Naive thymus-derived CD4-positive, alpha-beta T cell (primary cell): ENCODE measurements at regions of chr9 and their contacts with region 1.

Region 1: DNA sequence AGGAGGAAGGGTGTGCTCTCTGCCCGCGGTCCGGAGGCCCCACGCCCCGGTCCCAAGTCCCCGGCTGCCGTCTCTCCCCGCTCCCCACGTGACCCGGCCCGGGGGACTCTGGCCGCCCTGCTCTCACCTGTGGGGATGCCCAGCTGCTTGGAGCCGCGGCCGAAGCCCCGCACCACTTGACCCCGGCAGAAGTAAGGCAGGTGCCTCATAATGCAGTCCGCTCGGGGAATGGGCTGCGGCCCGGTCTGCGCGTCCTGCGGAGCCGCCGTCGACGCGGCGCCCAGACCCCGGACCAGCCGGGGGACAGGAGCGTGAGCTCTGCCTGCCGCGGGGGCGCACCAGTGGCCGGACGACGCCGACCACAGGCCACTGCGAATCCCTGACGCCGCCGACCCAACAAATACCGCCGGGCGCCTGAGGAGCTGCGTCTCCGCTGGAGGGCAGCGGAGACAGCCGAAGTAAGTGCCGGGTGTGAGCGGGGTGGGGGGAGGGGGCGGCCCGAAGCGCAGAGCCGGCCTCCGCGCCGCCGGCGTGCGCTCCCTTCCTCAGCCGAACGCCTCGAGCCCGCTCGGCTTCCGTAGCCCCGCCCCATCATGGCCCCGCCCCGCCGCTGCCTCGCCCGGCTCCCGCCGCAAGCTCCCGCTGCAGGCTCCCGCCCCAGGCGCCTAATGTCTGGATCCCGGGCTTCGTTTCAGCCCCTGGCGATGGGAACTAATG is at the start of gene RFK:
- DNase-seq: peak; percentile 89 to 99 (median 95)
- ATAC-seq: peak; percentile 97
- H3K4me3 ChIP-seq: peak within 1 kb of the TSS; percentile 92
- H3K4me3 Mint-ChIP-seq: peak within 1 kb of the TSS; percentile 94 to 100 (median 97)
- H3K27ac ChIP-seq: peak within 1 kb of the TSS; percentile 93
- H3K27ac Mint-ChIP-seq: peak within 1 kb of the TSS; percentile 95 to 99 (median 98)
- H3K4me1 ChIP-seq: peaks cover 10 to 13% of the 10 kb centered on the region in 2 donors
- H3K4me1 Mint-ChIP-seq: peaks cover 16 to 37% (median 33%) of the 10 kb centered on the region in 7 donors
- H3K27me3 ChIP-seq: no peaks in the 10 kb centered on the region
- H3K27me3 Mint-ChIP-seq: no peaks in the 10 kb centered on the region
- total RNA-seq, gene RFK: 6.8 to 18.6 (median 11.3) TPM

Region 2: DNA sequence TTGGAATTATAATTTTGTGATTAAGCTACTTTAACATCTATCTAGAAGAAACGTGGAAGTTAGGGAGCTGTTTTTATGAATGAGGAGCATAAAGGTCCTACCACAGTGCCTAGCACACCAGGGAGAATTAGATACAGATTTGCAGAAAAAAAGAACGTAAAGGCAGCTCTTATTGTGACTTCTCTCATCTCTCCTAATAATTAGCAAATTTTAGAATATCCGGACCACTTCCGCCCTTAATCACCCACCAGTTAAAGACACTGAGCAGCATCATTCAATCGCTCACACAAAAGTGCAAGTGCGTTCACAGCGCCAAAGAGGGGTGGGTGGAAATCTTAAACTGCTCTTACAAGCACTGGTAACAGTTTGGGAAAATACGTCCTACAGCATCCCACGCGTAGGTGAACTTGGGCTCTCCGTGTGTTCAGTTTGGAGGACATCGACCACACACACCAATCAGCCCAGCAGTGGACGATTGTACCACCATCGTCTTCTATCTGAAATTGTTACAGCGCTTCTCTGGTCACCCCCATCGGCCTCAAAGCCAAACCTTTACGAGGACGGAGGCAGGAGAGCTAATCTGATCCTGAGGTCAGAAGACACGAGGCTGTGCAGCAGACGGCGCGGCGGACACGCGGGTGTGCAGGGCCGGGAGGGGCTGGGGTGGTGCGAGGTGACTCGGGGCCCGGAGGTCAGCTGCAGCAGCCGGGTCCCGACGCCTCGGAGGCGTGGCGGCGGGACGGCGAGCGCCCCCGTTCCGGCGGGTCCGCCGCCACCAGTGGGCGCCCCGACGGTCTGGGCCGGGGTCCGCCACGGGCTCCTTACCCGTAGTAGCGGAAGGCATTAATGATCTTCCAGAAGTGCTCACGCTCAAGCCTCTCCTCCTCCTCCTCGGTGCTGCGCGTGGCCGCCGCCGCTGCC is 1366.7 kb before region 1 on chr9:
- CTCF ChIA-PET with region 1: no interaction called
- POLR2A ChIA-PET with region 1: interaction called, 4 read pairs
- intact Hi-C with region 1: loop called (anchors 1 kb)
- DNase-seq: peak in 8 of 9 donors; percentile 27 to 66 (median 35)
- ATAC-seq: peak; percentile 18
- H3K4me3 ChIP-seq: peak overlapping the region; percentile 69
- H3K4me3 Mint-ChIP-seq: peak overlapping the region; percentile 80 to 98 (median 96)
- H3K27ac ChIP-seq: peak overlapping the region; percentile 90
- H3K27ac Mint-ChIP-seq: peak overlapping the region; percentile 84 to 98 (median 95)
- H3K4me1 ChIP-seq: peaks cover 34 to 42% of the 10 kb centered on the region in 2 donors
- H3K4me1 Mint-ChIP-seq: peaks cover 30 to 54% (median 48%) of the 10 kb centered on the region in 7 donors
- H3K27me3 ChIP-seq: no peaks in the 10 kb centered on the region
- H3K27me3 Mint-ChIP-seq: peaks cover 0 to 3% (median 0%) of the 10 kb centered on the region in 5 donors

Region 3: DNA sequence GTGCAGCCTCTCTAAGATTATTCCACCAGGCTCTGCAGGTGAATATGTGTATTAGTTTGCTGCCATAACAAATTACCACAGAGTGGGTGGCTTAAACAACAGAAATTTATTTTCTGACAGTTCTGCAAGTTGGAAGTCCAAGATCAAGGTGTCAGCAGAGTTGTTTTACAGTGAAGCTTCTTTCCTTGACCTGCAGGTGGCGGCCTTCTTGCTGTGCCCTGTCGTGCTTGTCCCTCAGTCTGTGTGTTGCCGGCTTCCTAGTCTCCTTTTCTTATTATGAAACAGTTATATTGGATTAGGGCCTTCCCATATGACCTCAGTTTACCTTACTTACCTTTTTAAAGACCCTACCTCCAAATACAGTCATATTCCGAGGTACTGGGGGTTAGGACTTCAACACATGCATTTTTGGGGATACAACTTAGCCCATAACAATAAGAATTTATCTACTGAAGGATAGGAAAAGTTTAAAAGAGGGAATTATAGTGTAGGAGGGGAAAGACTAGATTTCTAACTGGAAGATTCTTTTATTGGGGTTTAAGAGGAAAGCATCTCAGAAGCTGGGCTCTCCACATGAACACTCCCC is 1208.4 kb before region 1 on chr9:
- CTCF ChIA-PET with region 1: no interaction called
- POLR2A ChIA-PET with region 1: no interaction called
- intact Hi-C with region 1: loop called in 1 of 2 experiments (anchors 5 kb)
- DNase-seq: peak in 7 of 9 donors; percentile 10 to 38 (median 25)
- ATAC-seq: peak; percentile 74
- H3K4me3 ChIP-seq: no peak overlapping the region
- H3K4me3 Mint-ChIP-seq: peak overlapping the region in 3 of 10 donors; percentile 20 to 36 (median 25)
- H3K27ac ChIP-seq: no peak overlapping the region
- H3K27ac Mint-ChIP-seq: peak overlapping the region in 2 of 9 donors; percentile 30 to 81
- H3K4me1 ChIP-seq: peaks cover 12 to 13% of the 10 kb centered on the region in 2 donors
- H3K4me1 Mint-ChIP-seq: peaks cover 8 to 32% (median 28%) of the 10 kb centered on the region in 7 donors
- H3K27me3 ChIP-seq: no peaks in the 10 kb centered on the region
- H3K27me3 Mint-ChIP-seq: no peaks in the 10 kb centered on the region

Region 4: DNA sequence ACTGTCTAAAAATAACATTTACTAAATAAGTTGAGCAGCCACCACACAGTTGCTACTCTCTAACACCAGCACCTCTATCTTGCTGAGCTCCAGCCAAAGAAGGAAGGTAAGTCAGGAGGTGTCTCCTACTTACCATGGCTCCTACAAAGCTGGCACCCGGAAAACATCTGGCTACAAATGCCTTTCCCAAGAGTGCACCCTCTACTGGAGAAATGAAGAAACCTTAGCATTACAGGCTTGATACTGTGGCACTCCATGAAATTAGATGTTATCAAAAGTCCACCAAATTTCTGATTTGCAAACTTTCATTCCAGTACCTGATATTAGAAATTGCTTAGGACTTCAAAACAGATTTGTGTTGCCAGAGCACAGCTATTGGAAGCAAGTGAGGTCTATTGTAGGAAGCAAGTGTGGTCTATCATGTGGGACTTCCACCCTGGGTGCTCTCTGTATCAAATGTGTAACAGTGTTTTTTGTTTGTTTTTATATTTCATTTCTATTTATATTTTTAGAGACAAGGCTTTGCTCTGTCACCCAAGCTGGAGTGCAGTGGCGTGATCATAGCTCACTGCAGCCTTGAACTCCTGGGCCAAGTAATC is 25.8 kb after region 1 on chr9:
- CTCF ChIA-PET with region 1: no interaction called
- POLR2A ChIA-PET with region 1: no interaction called
- intact Hi-C with region 1: loop called in 1 of 2 experiments (anchors 1 kb)
- DNase-seq: peak in 1 of 9 donors; percentile 5
- ATAC-seq: no peak
- H3K4me3 ChIP-seq: no peak overlapping the region
- H3K4me3 Mint-ChIP-seq: no peak overlapping the region
- H3K27ac ChIP-seq: no peak overlapping the region
- H3K27ac Mint-ChIP-seq: no peak overlapping the region
- H3K4me1 ChIP-seq: no peaks in the 10 kb centered on the region
- H3K4me1 Mint-ChIP-seq: peaks cover 3 to 40% (median 4%) of the 10 kb centered on the region in 7 donors
- H3K27me3 ChIP-seq: no peaks in the 10 kb centered on the region
- H3K27me3 Mint-ChIP-seq: no peaks in the 10 kb centered on the region

Region 5: GRCh38 chr9:76576344-76576743 is 182.2 kb after region 1 on chr9:
- CTCF ChIA-PET with region 1: no interaction called
- POLR2A ChIA-PET with region 1: no interaction called
- intact Hi-C with region 1: loop called in 1 of 2 experiments (anchors 2 kb)
- DNase-seq: peak in 1 of 9 donors; percentile 59
- ATAC-seq: peak; percentile 87
- H3K4me3 ChIP-seq: no peak overlapping the region
- H3K4me3 Mint-ChIP-seq: peak overlapping the region in 1 of 10 donors; percentile 36
- H3K27ac ChIP-seq: no peak overlapping the region
- H3K27ac Mint-ChIP-seq: peak overlapping the region in 1 of 9 donors; percentile 73
- H3K4me1 ChIP-seq: no peaks in the 10 kb centered on the region
- H3K4me1 Mint-ChIP-seq: peaks cover 6 to 36% (median 12%) of the 10 kb centered on the region in 7 donors
- H3K27me3 ChIP-seq: peaks cover 0 to 11% of the 10 kb centered on the region in 2 donors
- H3K27me3 Mint-ChIP-seq: peaks cover 10 to 45% (median 32%) of the 10 kb centered on the region in 5 donors

Region 6: DNA sequence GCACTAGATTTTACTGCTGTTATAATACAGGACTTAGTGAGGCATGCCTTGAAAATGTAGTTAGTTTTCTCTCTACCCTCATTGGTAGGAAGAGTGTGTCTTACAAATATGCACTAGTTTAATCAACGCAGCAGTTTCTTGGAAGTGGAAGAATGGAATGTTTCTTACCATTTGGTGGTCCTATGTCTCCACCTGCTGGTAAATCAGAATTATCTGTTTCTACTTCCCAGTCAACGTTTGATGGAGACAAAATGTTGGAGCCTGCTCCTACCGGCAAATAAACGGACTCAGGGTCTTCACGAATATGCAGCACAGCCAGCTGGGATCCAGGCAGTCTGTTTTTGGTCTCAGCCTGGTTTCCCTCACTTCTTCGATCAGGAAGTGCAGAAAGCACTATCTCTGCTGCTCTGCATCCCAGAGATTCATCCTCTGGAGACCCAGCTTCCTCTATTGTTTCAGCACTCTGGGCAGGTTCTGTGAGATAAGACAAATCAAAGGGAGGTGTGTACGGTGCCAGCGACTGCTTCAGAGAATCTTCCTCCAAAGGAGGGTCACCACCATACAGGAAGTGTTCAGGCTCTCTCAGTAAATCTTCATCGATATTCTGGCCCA is 310.6 kb after region 1 on chr9:
- CTCF ChIA-PET with region 1: interaction called, 4 read pairs
- POLR2A ChIA-PET with region 1: interaction called, 3 read pairs
- intact Hi-C with region 1: loop called (anchors 2 kb)
- DNase-seq: peak in 7 of 9 donors; percentile 12 to 55 (median 35)
- ATAC-seq: peak; percentile 63
- H3K4me3 ChIP-seq: no peak overlapping the region
- H3K4me3 Mint-ChIP-seq: no peak overlapping the region
- H3K27ac ChIP-seq: no peak overlapping the region
- H3K27ac Mint-ChIP-seq: no peak overlapping the region
- H3K4me1 ChIP-seq: no peaks in the 10 kb centered on the region
- H3K4me1 Mint-ChIP-seq: peaks cover 0 to 16% (median 1%) of the 10 kb centered on the region in 7 donors
- H3K27me3 ChIP-seq: no peaks in the 10 kb centered on the region
- H3K27me3 Mint-ChIP-seq: peaks cover 35 to 51% (median 40%) of the 10 kb centered on the region in 5 donors

Region 7: GRCh38 chr9:77177161-77177893 is 783.2 kb after region 1 on chr9 and contains the start of gene VPS13A:
- CTCF ChIA-PET with region 1: no interaction called
- POLR2A ChIA-PET with region 1: no interaction called
- intact Hi-C with region 1: loop called (anchors 1 kb)
- DNase-seq: peak; percentile 78 to 92 (median 87)
- ATAC-seq: peak; percentile 92
- H3K4me3 ChIP-seq: peak within 1 kb of the TSS; percentile 89
- H3K4me3 Mint-ChIP-seq: peak within 1 kb of the TSS; percentile 90 to 98 (median 96)
- H3K27ac ChIP-seq: peak within 1 kb of the TSS; percentile 86
- H3K27ac Mint-ChIP-seq: peak within 1 kb of the TSS; percentile 76 to 96 (median 90)
- H3K4me1 ChIP-seq: peaks cover 5 to 17% of the 10 kb centered on the region in 2 donors
- H3K4me1 Mint-ChIP-seq: peaks cover 12 to 39% (median 30%) of the 10 kb centered on the region in 7 donors
- H3K27me3 ChIP-seq: no peaks in the 10 kb centered on the region
- H3K27me3 Mint-ChIP-seq: peaks cover 0 to 20% (median 0%) of the 10 kb centered on the region in 5 donors
- total RNA-seq, gene VPS13A: 37.1 to 52.8 (median 42.6) TPM